ENCODE measurements at regions of chr12 and their contacts with region 1.

Region 1: GRCh38 chr12:106919910-106920544 is 35.7 kb upstream of the TMEM263 start:
- DNase-seq: peak; percentile 60
- H3K4me3 ChIP-seq: no peak overlapping the region
- H3K27ac ChIP-seq: no peak overlapping the region
- H3K4me1 ChIP-seq: peaks cover 13% of the 10 kb centered on the region
- H3K27me3 ChIP-seq: peaks cover 8 to 10% of the 10 kb centered on the region in 2 experiments
- CTCF ChIP-seq: peak; percentile 37 to 54
- POLR2A ChIP-seq: no peak

Region 2: DNA sequence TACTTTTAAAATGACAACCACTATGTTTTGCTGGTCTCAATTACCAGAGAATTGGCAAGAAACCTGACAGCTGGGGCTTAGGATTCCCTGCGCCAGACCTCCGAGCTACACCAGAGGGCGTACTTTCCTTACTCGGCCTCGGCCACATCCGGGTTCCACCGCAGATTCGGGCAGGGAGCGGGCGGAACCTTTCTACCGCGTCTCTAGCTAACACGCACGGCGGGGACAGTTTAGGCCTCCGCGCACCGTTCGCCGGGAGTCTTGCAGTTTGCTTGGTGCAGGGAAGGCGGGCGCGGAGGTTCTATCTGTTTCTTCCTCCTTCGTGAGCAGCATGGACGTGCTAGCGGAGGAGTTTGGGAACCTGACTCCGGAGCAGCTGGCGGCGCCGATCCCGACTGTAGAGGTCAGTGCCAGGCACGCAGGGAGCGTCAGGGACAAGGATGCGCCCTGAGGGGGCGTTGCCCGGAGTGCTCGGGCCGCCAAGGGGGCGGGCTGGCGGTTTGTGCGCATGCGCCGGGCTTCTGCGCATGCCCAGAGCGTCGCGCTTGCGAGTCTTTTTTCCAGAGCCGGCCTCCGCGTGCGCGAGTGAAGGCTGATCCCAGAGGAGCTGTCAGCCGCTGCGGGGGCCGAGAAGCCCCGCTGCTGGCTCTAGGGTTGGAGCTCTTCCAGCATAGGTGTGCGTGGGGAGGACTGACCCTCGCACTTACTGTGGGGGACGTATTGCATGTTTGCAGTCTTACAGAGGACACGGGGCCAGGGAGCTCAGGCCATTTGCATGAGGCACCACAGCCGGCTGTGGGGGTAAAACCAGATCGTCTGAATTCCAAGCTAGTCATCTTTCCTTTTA is 562.3 kb before region 1 on chr12 and contains the start of gene POLR3B:
- CTCF ChIA-PET with region 1: interaction called, 111 read pairs
- POLR2A ChIA-PET with region 1: no interaction called
- dilution Hi-C with region 1: no loop called
- intact Hi-C with region 1: loop called (anchors 1 kb)
- DNase-seq: peak; percentile 97
- H3K4me3 ChIP-seq: peak within 1 kb of the TSS; percentile 52 to 92 (median 87)
- H3K27ac ChIP-seq: peak within 1 kb of the TSS; percentile 64
- H3K4me1 ChIP-seq: peaks cover 12% of the 10 kb centered on the region
- H3K27me3 ChIP-seq: peaks cover 0 to 4% of the 10 kb centered on the region in 2 experiments
- CTCF ChIP-seq: peak; percentile 86 to 89
- POLR2A ChIP-seq: peak; percentile 90
- total RNA-seq, gene POLR3B: 10.1 and 12.3 TPM in 2 replicates

Region 3: GRCh38 chr12:106386813-106387535 is 533.1 kb before region 1 on chr12:
- CTCF ChIA-PET with region 1: interaction called, 36 read pairs
- POLR2A ChIA-PET with region 1: no interaction called
- dilution Hi-C with region 1: no loop called
- intact Hi-C with region 1: loop called (anchors 1 kb)
- DNase-seq: no peak
- H3K4me3 ChIP-seq: no peak overlapping the region
- H3K27ac ChIP-seq: no peak overlapping the region
- H3K4me1 ChIP-seq: no peaks in the 10 kb centered on the region
- H3K27me3 ChIP-seq: no peaks in the 10 kb centered on the region
- CTCF ChIP-seq: no peak
- POLR2A ChIP-seq: no peak

Region 4: GRCh38 chr12:106581543-106582248 is 338.3 kb before region 1 on chr12:
- CTCF ChIA-PET with region 1: no interaction called
- POLR2A ChIA-PET with region 1: no interaction called
- dilution Hi-C with region 1: no loop called
- intact Hi-C with region 1: loop called (anchors 10 kb)
- DNase-seq: no peak
- H3K4me3 ChIP-seq: no peak overlapping the region
- H3K27ac ChIP-seq: no peak overlapping the region
- H3K4me1 ChIP-seq: no peaks in the 10 kb centered on the region
- H3K27me3 ChIP-seq: peaks cover 68 to 73% of the 10 kb centered on the region in 2 experiments
- CTCF ChIP-seq: no peak
- POLR2A ChIP-seq: no peak

Region 5: GRCh38 chr12:106841510-106842302 is 78.3 kb before region 1 on chr12:
- CTCF ChIA-PET with region 1: interaction called, 4 read pairs
- POLR2A ChIA-PET with region 1: no interaction called
- dilution Hi-C with region 1: no loop called
- intact Hi-C with region 1: loop called (anchors 5 kb)
- DNase-seq: peak; percentile 75
- H3K4me3 ChIP-seq: peak overlapping the region in 1 of 3 experiments; percentile 27
- H3K27ac ChIP-seq: peak overlapping the region; percentile 15
- H3K4me1 ChIP-seq: peaks cover 20% of the 10 kb centered on the region
- H3K27me3 ChIP-seq: no peaks in the 10 kb centered on the region
- CTCF ChIP-seq: peak; percentile 28 to 43
- POLR2A ChIP-seq: no peak

Region 6: DNA sequence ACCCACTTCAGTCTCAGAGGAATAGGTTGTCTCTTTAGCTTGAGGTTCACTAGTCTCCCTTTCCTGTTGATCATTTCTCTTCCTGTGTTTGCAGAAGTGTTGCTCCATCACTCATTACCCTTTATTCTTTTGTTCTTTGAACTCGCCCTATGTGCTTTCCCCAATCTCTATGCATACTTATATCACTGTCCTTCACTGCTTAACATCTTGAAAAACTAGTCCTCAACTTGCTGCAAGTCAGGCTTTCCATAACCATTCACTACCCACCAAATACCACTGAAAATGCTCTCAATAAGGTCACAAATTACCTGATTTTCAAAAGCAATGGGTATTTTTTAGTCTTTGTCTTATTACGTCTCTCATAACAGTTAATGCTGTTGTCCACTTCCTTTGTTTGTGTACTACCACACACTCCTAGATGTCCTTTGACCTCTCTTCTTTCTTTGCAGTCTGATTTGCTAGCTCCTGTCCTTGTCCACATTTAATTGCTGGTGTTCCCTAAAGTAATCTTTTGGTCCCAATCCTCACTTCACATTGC is 64.7 kb before region 1 on chr12:
- CTCF ChIA-PET with region 1: no interaction called
- POLR2A ChIA-PET with region 1: no interaction called
- dilution Hi-C with region 1: no loop called
- intact Hi-C with region 1: no loop called
- DNase-seq: no peak
- H3K4me3 ChIP-seq: no peak overlapping the region
- H3K27ac ChIP-seq: no peak overlapping the region
- H3K4me1 ChIP-seq: no peaks in the 10 kb centered on the region
- H3K27me3 ChIP-seq: no peaks in the 10 kb centered on the region
- CTCF ChIP-seq: no peak
- POLR2A ChIP-seq: no peak

Region 7: GRCh38 chr12:107045186-107045585 is 125.2 kb after region 1 on chr12:
- CTCF ChIA-PET with region 1: no interaction called
- POLR2A ChIA-PET with region 1: no interaction called
- dilution Hi-C with region 1: no loop called
- intact Hi-C with region 1: no loop called
- DNase-seq: no peak
- H3K4me3 ChIP-seq: no peak overlapping the region
- H3K27ac ChIP-seq: no peak overlapping the region
- H3K4me1 ChIP-seq: no peaks in the 10 kb centered on the region
- H3K27me3 ChIP-seq: no peaks in the 10 kb centered on the region
- CTCF ChIP-seq: no peak
- POLR2A ChIP-seq: no peak

Measured in endothelial cell of umbilical vein (primary cell).